HEK293 (cell line): ENCODE measurements at regions of chr18 and their contacts with region 1.

Region 1: GRCh38 chr18:58043491-58044379 is at the start of gene NEDD4L:
- H3K4me3 ChIP-seq: peak within 1 kb of the TSS; percentile 81
- H3K27ac ChIP-seq: peak within 1 kb of the TSS; percentile 95
- H3K4me1 ChIP-seq: peaks cover 17% of the 10 kb centered on the region
- CTCF ChIP-seq: peak; percentile 86

Region 2: DNA sequence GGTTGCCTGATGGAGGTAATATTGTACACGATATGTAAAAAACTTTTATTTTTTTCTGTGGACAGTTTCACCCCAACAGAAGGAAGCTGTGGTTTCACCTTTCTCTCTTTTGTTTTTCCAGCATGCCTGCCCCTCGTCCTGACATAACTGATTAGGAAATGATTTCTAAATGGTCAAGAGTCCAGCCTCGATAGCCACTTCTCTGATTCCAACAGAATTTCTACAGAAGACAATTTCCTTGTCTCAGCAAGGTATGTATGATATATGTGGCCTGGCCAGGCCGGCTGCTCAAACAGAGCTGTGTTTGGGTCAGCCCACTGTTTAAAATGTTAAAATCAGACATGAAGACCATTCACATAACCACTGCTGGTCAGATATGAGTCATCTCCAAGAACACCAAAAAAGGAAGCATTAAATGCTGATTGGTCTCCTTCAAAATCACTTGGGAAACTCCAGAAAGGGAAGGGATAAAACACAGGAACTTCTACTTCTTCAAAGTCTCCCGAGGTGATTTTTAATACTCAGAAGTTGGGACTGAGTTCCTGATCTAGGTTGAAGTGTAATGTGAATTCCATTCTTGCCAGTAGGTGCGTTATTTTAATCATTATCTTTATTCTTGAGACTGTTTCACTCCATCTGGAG is 262.9 kb before region 1 on chr18:
- CTCF ChIA-PET with region 1: no interaction called
- POLR2A ChIA-PET with region 1: no interaction called
- H3K4me3 ChIP-seq: no peak overlapping the region
- H3K27ac ChIP-seq: peak overlapping the region; percentile 22; the same call in 1 of the 2 replicates
- H3K4me1 ChIP-seq: peaks cover 13% of the 10 kb centered on the region
- CTCF ChIP-seq: no peak

Region 3: DNA sequence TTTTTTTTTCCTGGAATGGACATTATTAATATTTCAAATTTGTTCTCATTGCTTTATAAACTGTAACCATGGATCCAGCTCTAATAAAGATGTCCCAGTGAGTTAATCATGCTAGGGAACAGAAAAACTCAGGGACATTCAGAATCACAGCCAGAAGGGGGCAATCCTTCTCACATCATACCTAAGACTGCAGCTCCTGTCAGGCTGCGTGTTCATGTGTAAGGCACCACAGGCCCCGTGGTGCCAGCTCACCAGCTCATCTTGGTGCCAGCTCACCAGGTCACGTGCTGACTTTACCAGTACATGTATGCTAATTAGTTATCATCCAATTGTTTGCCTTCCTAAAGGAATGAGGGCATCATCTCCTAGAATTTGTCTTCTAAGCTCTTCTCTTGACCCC is 84.5 kb before region 1 on chr18:
- CTCF ChIA-PET with region 1: interaction called, 11 read pairs
- POLR2A ChIA-PET with region 1: no interaction called
- H3K4me3 ChIP-seq: no peak overlapping the region
- H3K27ac ChIP-seq: no peak overlapping the region
- H3K4me1 ChIP-seq: peaks cover 8% of the 10 kb centered on the region; the same call in 1 of the 2 replicates
- CTCF ChIP-seq: no peak

Region 4: DNA sequence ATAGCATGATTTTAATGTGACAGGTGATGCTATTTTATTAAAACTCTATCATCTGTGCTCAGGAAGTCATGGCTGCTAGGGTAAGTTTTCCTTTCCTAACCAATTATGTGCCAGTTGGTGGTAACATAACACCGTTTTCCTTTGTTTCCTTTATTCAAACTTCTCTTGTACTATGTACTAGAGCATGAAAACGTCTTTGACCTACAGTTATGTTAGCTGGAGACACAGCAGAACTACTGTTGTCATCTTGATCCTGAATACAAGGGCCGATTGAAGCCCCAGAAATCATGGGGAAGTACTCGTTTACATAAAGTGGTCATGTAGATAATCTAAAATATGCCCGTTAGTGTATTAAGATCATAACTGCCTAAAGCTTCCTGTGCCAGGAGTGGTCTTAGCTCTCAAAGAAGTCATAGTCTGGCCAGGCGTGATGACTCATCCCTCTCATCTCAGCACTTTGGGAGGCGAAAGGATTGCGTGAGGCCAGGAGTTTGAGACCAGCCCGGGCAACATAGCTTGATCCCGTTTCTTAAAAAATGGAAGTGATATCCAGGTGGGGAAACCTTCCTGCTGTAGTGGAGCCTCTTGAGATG is 20.8 kb after region 1 on chr18:
- CTCF ChIA-PET with region 1: interaction called, 16 read pairs
- POLR2A ChIA-PET with region 1: no interaction called
- H3K4me3 ChIP-seq: no peak overlapping the region
- H3K27ac ChIP-seq: no peak overlapping the region
- H3K4me1 ChIP-seq: no peaks in the 10 kb centered on the region
- CTCF ChIP-seq: no peak

Region 5: DNA sequence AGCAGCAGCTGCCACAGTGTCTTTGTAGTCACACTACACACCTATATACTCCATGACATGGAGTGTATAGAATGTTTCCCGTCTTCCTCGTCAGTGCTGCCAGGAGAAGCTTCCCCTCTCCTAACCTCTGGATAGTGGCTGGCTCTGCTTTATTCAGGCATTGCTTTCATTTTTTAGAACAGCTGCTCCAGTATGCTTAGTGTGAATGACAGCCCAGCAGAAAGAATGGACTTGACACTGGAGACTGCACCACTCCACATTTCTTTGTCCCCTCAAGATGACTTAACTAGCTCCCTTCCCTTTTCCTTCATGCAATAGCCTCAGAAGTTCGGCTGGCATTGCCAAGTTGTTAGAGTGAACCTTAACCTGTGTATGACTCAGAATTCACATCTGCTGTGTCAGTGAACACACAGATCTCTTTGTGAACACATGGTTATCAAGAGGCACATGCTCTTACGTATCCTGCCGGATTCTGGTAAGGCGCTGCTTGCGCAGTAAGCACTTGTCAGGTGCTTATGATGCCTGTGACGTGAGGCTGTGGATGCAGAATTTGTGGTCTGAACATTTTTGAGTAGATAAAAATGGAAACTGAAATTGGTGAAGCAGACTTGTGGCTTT is 74.2 kb after region 1 on chr18:
- CTCF ChIA-PET with region 1: interaction called, 100 read pairs
- POLR2A ChIA-PET with region 1: interaction called, 4 read pairs
- H3K4me3 ChIP-seq: no peak overlapping the region
- H3K27ac ChIP-seq: no peak overlapping the region
- H3K4me1 ChIP-seq: 0 out of 2 replicates have a peak, but pooled peaks cover 2% of the 10 kb centered on the region
- CTCF ChIP-seq: no peak

Region 6: DNA sequence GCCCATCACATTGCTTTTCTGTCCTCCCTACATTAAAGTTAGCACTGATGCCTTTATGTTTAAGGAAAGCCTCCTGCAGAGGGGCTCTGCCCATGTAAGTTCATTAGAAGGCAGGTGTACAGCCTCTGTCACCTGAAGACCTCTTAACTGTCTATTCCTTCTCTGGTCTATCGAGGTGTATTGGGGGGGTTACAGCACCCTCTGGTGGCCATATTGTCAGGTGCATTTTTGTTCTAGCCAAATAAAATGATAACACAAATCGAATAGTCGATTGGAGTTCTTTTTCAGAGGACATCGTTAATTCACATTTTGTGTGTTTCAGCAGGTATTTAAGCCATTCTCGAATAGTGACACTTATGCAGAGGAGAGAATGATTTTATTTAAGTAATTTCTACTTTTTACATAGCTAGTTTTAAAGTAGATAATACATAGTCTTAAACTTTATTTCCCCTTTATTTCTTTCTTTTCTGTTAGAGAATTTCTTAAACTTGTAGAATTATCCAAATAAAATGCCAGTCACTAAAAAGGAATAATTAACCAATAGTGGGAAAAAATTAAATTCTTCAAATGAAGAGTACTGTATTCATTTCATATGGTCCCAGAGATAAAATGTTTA is 137.1 kb after region 1 on chr18:
- CTCF ChIA-PET with region 1: interaction called, 11 read pairs
- POLR2A ChIA-PET with region 1: interaction called, 3 read pairs
- H3K4me3 ChIP-seq: no peak overlapping the region
- H3K27ac ChIP-seq: no peak overlapping the region
- H3K4me1 ChIP-seq: peaks cover 5% of the 10 kb centered on the region; the same call in 1 of the 2 replicates
- CTCF ChIP-seq: peak; percentile 62

Region 7: GRCh38 chr18:58529714-58530354 is 486.1 kb after region 1 on chr18:
- CTCF ChIA-PET with region 1: no interaction called
- POLR2A ChIA-PET with region 1: no interaction called
- H3K4me3 ChIP-seq: no peak overlapping the region
- H3K27ac ChIP-seq: no peak overlapping the region
- H3K4me1 ChIP-seq: no peaks in the 10 kb centered on the region
- CTCF ChIP-seq: peak; percentile 65